PC-3 (cell line): ENCODE measurements at regions of chr7 and their contacts with region 1.

Region 1: DNA sequence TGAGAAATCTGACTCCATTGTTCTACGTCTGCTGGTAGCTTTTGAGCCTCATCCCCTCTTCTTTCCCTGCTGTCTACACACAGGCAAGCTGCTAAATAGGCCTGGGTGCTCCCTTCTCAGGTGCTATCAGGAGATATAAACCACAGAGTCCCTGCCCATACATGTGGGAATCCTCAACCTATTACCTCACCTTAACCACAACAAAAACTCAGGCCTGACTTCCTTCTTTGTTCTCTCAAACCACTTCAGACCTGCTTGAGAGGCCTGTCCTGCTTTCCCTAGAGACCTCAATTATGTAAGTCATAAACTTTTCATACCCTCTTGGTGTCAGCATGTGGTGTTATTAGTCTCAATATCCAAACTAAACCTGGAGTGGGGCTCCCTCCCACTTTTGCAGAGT is 75.0 kb upstream of the MAGI2 start:
- DNase-seq: peak; percentile 53
- ATAC-seq: peak; percentile 41
- H3K4me3 ChIP-seq: no peak overlapping the region
- H3K27ac ChIP-seq: no peak overlapping the region
- H3K4me1 ChIP-seq: peaks cover 13% of the 10 kb centered on the region; the same call in 1 of the 2 replicates
- H3K27me3 ChIP-seq: no peaks in the 10 kb centered on the region
- CTCF ChIP-seq: no peak

Region 2: DNA sequence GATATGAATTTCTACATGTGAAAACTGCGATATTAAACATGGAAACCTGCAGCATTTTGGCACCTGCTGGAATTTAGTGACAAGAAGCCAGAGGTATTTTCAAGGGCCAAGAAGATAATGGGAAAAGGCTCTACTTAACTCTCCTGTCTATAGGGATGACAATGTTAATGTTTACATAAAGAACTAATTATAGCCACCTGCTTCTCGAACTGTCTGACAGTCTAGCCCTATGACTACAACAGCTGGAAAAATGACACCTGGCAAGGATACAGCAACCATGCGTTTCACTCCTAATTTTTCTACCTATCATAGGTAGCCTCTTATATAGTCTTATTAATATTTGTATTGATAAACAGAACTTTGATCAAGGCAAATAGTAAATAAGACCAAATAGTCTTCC is 124.5 kb before region 1 on chr7:
- CTCF ChIA-PET with region 1: no interaction called
- POLR2A ChIA-PET with region 1: no interaction called
- intact Hi-C with region 1: no loop called
- DNase-seq: no peak
- ATAC-seq: no peak
- H3K4me3 ChIP-seq: no peak overlapping the region
- H3K27ac ChIP-seq: no peak overlapping the region
- H3K4me1 ChIP-seq: peaks cover 15% of the 10 kb centered on the region
- H3K27me3 ChIP-seq: no peaks in the 10 kb centered on the region
- CTCF ChIP-seq: no peak

Region 3: DNA sequence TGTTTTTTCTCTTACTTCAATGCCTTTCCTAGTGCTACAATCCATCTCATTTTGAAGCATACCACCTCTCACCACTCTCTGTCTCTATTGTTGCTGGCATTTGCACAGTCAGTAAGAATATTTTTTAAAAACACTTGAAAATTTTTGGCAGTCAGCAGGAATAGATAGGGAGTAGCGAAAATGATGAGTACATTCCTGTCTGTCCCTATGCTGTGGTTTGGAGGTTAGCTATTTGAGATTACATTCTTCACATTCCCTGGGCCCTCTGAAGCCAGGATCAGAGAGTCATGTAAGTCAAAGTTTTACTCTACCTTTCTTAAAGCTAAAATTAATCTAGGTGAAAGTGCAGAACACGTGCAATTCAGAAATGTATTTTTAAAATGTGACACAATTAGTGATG is 21.9 kb before region 1 on chr7:
- CTCF ChIA-PET with region 1: no interaction called
- POLR2A ChIA-PET with region 1: no interaction called
- intact Hi-C with region 1: no loop called
- DNase-seq: peak; percentile 20
- ATAC-seq: no peak
- H3K4me3 ChIP-seq: no peak overlapping the region
- H3K27ac ChIP-seq: no peak overlapping the region
- H3K4me1 ChIP-seq: no peaks in the 10 kb centered on the region
- H3K27me3 ChIP-seq: no peaks in the 10 kb centered on the region
- CTCF ChIP-seq: no peak

Region 4: GRCh38 chr7:79539161-79539560 is 10.7 kb after region 1 on chr7:
- CTCF ChIA-PET with region 1: no interaction called
- POLR2A ChIA-PET with region 1: interaction called, 11 read pairs
- intact Hi-C with region 1: no loop called
- DNase-seq: no peak
- ATAC-seq: no peak
- H3K4me3 ChIP-seq: no peak overlapping the region
- H3K27ac ChIP-seq: no peak overlapping the region
- H3K4me1 ChIP-seq: peaks cover 8% of the 10 kb centered on the region
- H3K27me3 ChIP-seq: no peaks in the 10 kb centered on the region
- CTCF ChIP-seq: no peak